Prostate gland (tissue), 2 donors: ENCODE measurements at regions of chrX and their contacts with region 1.

Region 1: DNA sequence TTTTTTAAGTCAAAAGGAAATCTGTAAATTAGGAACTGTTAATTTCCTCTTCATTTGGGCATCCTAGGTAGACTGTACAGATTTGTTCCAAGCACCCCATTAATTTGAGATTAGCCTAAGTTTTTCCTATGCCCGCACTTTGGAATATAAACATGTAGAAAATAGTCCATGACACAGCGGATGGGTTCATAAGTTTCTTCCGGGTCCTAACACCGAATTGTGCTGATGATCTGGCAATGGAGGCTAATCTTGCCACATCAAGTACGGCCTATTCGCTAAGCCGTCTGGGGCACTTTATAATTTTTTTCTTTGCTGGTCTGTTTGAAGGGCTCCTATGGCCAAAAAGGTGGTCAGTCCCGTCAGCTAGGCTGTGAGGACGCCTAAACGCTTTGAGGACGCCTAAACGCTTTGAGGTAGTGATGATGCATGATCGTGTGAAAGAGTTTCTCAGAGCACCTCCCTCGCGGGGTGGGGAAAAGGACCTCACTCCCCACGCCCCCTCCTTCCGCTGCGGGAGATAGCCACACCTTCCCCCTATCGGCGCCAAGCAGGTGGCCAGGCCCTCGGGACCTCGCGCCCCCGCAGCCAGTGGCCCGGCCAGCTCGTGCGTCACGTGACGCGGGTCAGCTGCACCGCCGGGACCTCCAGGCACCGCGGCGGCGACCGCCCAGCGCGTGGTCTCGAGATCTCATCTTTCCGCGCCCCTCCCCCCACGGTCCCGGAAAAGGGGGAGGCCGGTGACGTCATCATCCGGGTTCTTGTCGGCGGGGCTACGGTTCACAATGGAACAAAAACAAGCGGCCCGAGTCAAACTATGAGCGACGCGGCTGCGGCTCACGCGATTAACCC is 977 bp upstream of the USP9X start:
- DNase-seq: peak; percentile 88
- H3K4me3 ChIP-seq: peak overlapping the region; percentile 70 to 71
- H3K27ac ChIP-seq: peak overlapping the region; percentile 96 to 97
- H3K4me1 ChIP-seq: no peaks in the 10 kb centered on the region
- H3K27me3 ChIP-seq: no peaks in the 10 kb centered on the region
- CTCF ChIP-seq: peak in 2 of 4 experiments; percentile 26 to 38
- POLR2A ChIP-seq: peak; percentile 61

Region 2: GRCh38 chrX:41010188-41010846 is 74.0 kb before region 1 on chrX:
- intact Hi-C with region 1: loop called (anchors 5 kb)
- DNase-seq: peak; percentile 70
- H3K4me3 ChIP-seq: peak overlapping the region; percentile 6 to 8
- H3K27ac ChIP-seq: peak overlapping the region; percentile 58 to 72
- H3K4me1 ChIP-seq: no peaks in the 10 kb centered on the region
- H3K27me3 ChIP-seq: no peaks in the 10 kb centered on the region
- CTCF ChIP-seq: peak in 1 of 4 experiments; percentile 39
- POLR2A ChIP-seq: peak; percentile 18

Region 3: GRCh38 chrX:41333744-41334259 is 249.5 kb after region 1 on chrX and contains the start of gene DDX3X:
- intact Hi-C with region 1: loop called (anchors 10 kb)
- DNase-seq: peak; percentile 76
- H3K4me3 ChIP-seq: peak within 1 kb of the TSS; percentile 73 to 78
- H3K27ac ChIP-seq: peak within 1 kb of the TSS; percentile 98 to 99
- H3K4me1 ChIP-seq: no peaks in the 10 kb centered on the region
- H3K27me3 ChIP-seq: no peaks in the 10 kb centered on the region
- CTCF ChIP-seq: peak in 2 of 4 experiments; percentile 36 to 53
- POLR2A ChIP-seq: peak; percentile 79
- total RNA-seq, gene DDX3X: 107 to 115 TPM